ENCODE measurements at regions of chr3 and their contacts with region 1.

Region 1: GRCh38 chr3:138118612-138119422 is 3.4 kb upstream of the DZIP1L start:
- DNase-seq: peak; percentile 73
- H3K4me3 ChIP-seq: no peak overlapping the region; a peak in 1 of 4 replicates
- H3K27ac ChIP-seq: no peak overlapping the region
- H3K4me1 ChIP-seq: peaks cover 4 to 13% of the 10 kb centered on the region in 2 experiments; a peak in 3 of 4 replicates
- H3K27me3 ChIP-seq: no peaks in the 10 kb centered on the region
- CTCF ChIP-seq: peak; percentile 84
- EP300 ChIP-seq: no peak
- RAD21 ChIP-seq: peak; percentile 88

Region 2: GRCh38 chr3:138062626-138063025 is 56.2 kb before region 1 on chr3:
- CTCF ChIA-PET with region 1: interaction called, 35 read pairs
- POLR2A ChIA-PET with region 1: interaction called, 3 read pairs
- DNase-seq: no peak
- H3K4me3 ChIP-seq: no peak overlapping the region
- H3K27ac ChIP-seq: peak overlapping the region in 1 of 2 experiments; percentile 28; a peak in 1 of 4 replicates
- H3K4me1 ChIP-seq: peaks cover 3 to 8% of the 10 kb centered on the region in 2 experiments; a peak in 3 of 4 replicates
- H3K27me3 ChIP-seq: no peaks in the 10 kb centered on the region
- CTCF ChIP-seq: no peak
- EP300 ChIP-seq: no peak; a peak in 1 of 4 replicates
- RAD21 ChIP-seq: no peak

Region 3: GRCh38 chr3:138068579-138069174 is 50.1 kb before region 1 on chr3:
- CTCF ChIA-PET with region 1: interaction called, 69 read pairs
- POLR2A ChIA-PET with region 1: interaction called, 5 read pairs
- DNase-seq: peak; percentile 87
- H3K4me3 ChIP-seq: no peak overlapping the region
- H3K27ac ChIP-seq: no peak overlapping the region
- H3K4me1 ChIP-seq: no peaks in the 10 kb centered on the region; a peak in 1 of 4 replicates
- H3K27me3 ChIP-seq: no peaks in the 10 kb centered on the region
- CTCF ChIP-seq: peak; percentile 98
- EP300 ChIP-seq: no peak
- RAD21 ChIP-seq: peak; percentile 97

Region 4: GRCh38 chr3:138092023-138092422 is 26.8 kb before region 1 on chr3:
- CTCF ChIA-PET with region 1: interaction called, 10 read pairs
- POLR2A ChIA-PET with region 1: no interaction called
- DNase-seq: no peak
- H3K4me3 ChIP-seq: no peak overlapping the region
- H3K27ac ChIP-seq: no peak overlapping the region
- H3K4me1 ChIP-seq: peaks cover 0 to 11% of the 10 kb centered on the region in 2 experiments; a peak in 2 of 4 replicates
- H3K27me3 ChIP-seq: no peaks in the 10 kb centered on the region
- CTCF ChIP-seq: no peak
- EP300 ChIP-seq: no peak
- RAD21 ChIP-seq: no peak

Region 5: DNA sequence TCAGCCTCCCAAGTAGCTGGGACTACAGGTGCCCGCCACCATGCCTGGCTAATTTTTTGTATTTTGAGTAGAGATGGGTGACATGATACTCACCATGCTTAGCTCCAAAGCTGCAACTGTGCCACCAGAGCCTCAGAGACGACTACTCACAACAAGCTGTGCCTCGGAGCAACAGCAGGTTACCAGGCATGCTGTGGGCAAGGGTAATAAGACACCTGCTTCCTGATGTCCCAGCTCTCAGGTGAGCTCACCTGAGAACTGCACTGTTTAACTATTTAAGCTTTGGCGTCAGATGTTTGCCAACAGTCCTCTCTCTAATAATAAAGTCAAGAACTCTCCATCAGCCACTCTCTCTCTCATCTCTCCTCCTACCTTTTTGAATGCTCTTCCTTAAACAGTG is 10.7 kb before region 1 on chr3:
- CTCF ChIA-PET with region 1: interaction called, 18 read pairs
- POLR2A ChIA-PET with region 1: no interaction called
- DNase-seq: no peak
- H3K4me3 ChIP-seq: no peak overlapping the region
- H3K27ac ChIP-seq: no peak overlapping the region
- H3K4me1 ChIP-seq: peaks cover 0 to 1% of the 10 kb centered on the region in 2 experiments; a peak in 1 of 4 replicates
- H3K27me3 ChIP-seq: no peaks in the 10 kb centered on the region
- CTCF ChIP-seq: no peak
- EP300 ChIP-seq: no peak
- RAD21 ChIP-seq: no peak

Region 6: GRCh38 chr3:138132239-138132638 is 13.4 kb after region 1 on chr3 and contains the start of gene A4GNT:
- CTCF ChIA-PET with region 1: interaction called, 14 read pairs
- POLR2A ChIA-PET with region 1: interaction called, 16 read pairs
- DNase-seq: no peak
- H3K4me3 ChIP-seq: no peak within 1 kb of the TSS
- H3K27ac ChIP-seq: no peak within 1 kb of the TSS
- H3K4me1 ChIP-seq: peaks cover 0 to 2% of the 10 kb centered on the region in 2 experiments; a peak in 1 of 4 replicates
- H3K27me3 ChIP-seq: no peaks in the 10 kb centered on the region
- CTCF ChIP-seq: no peak
- EP300 ChIP-seq: no peak
- RAD21 ChIP-seq: no peak
- polyA plus RNA-seq, gene A4GNT: not detected in 2 replicates

Measured in SK-N-SH (cell line).